CD8-positive, alpha-beta memory T cell (primary cell): ENCODE measurements at regions of chr12 and their contacts with region 1.

Region 1: GRCh38 chr12:104064031-104064822 is at the start of gene HCFC2:
- DNase-seq: peak; percentile 83 to 90 (median 87)
- H3K4me3 ChIP-seq: peak within 1 kb of the TSS; percentile 99
- H3K4me3 Mint-ChIP-seq: peak within 1 kb of the TSS; percentile 92 to 97 (median 95)
- H3K27ac ChIP-seq: peak within 1 kb of the TSS; percentile 84
- H3K27ac Mint-ChIP-seq: peak within 1 kb of the TSS; percentile 82 to 95 (median 91)
- H3K4me1 ChIP-seq: peaks cover 9% of the 10 kb centered on the region
- H3K4me1 Mint-ChIP-seq: peaks cover 24 to 36% (median 31%) of the 10 kb centered on the region in 3 donors
- H3K27me3 ChIP-seq: no peaks in the 10 kb centered on the region
- H3K27me3 Mint-ChIP-seq: peaks cover 3 to 22% of the 10 kb centered on the region in 2 donors
- total RNA-seq, gene HCFC2: 12.5 to 13.0 TPM

Region 2: GRCh38 chr12:103965590-103966504 is 98.4 kb before region 1 on chr12 and contains the start of gene TDG:
- CTCF ChIA-PET with region 1: no interaction called
- POLR2A ChIA-PET with region 1: interaction called, 12 read pairs
- DNase-seq: peak; percentile 95 to 99 (median 97)
- H3K4me3 ChIP-seq: peak within 1 kb of the TSS; percentile 74
- H3K4me3 Mint-ChIP-seq: peak within 1 kb of the TSS; percentile 93 to 99 (median 96)
- H3K27ac ChIP-seq: peak within 1 kb of the TSS; percentile 90
- H3K27ac Mint-ChIP-seq: peak within 1 kb of the TSS; percentile 91 to 100 (median 99)
- H3K4me1 ChIP-seq: peaks cover 41% of the 10 kb centered on the region
- H3K4me1 Mint-ChIP-seq: peaks cover 54 to 68% (median 66%) of the 10 kb centered on the region in 3 donors
- H3K27me3 ChIP-seq: no peaks in the 10 kb centered on the region
- H3K27me3 Mint-ChIP-seq: no peaks in the 10 kb centered on the region
- total RNA-seq, gene TDG: 51.2 to 52.6 TPM

Region 3: GRCh38 chr12:104137913-104138796 is 73.9 kb after region 1 on chr12 and contains the start of gene NFYB:
- CTCF ChIA-PET with region 1: no interaction called
- POLR2A ChIA-PET with region 1: interaction called, 12 read pairs
- DNase-seq: peak; percentile 85 to 96 (median 93)
- H3K4me3 ChIP-seq: peak within 1 kb of the TSS; percentile 49
- H3K4me3 Mint-ChIP-seq: peak within 1 kb of the TSS; percentile 85 to 98 (median 92)
- H3K27ac ChIP-seq: peak within 1 kb of the TSS; percentile 44
- H3K27ac Mint-ChIP-seq: peak within 1 kb of the TSS; percentile 30 to 93 (median 92)
- H3K4me1 ChIP-seq: peaks cover 24% of the 10 kb centered on the region
- H3K4me1 Mint-ChIP-seq: peaks cover 6 to 18% (median 15%) of the 10 kb centered on the region in 3 donors
- H3K27me3 ChIP-seq: no peaks in the 10 kb centered on the region
- H3K27me3 Mint-ChIP-seq: peaks cover 0 to 2% of the 10 kb centered on the region in 2 donors
- total RNA-seq, gene NFYB: 25.5 to 27.5 TPM

Region 4: DNA sequence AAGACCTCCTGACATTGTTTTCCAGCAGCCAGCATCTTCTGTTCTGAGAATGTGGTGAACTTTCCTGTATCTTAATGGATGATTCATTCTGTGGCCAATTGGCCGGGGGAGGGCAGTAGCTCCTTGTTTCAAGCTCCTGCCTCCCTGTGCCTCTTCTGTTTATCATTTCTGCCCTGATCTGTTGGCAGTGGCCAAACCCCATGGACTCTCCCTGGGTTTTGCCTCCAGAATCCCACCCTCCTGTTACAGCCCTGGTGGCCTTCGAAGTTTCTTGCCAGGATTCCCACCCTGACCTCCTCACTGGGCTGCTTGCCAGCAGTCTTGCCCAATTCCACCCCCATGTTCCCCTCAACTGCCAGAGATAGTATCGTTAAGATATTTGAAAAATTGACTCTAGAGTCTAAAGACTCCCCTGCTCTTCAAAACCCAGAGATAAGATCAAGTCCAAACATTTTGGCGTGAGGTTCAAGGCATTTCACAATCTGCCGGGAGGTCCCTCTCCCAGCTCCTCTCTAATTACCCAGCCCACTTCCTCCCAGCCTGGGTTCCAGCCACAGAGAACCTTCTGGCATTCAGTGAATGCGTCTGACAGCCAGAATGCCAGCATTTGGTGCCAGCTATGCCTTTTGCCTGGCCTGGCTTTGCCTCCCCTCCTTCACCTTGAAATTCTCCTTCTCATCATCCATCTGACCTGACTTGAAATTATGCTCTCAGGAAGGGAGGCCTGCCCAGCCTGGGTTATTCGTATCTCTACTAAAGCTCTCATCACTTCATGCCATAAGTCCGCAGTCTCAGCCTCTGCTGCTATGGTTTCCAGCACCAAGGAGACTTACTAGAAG is 113.7 kb after region 1 on chr12:
- CTCF ChIA-PET with region 1: no interaction called
- POLR2A ChIA-PET with region 1: no interaction called
- DNase-seq: no peak
- H3K4me3 ChIP-seq: no peak overlapping the region
- H3K4me3 Mint-ChIP-seq: no peak overlapping the region
- H3K27ac ChIP-seq: no peak overlapping the region
- H3K27ac Mint-ChIP-seq: no peak overlapping the region
- H3K4me1 ChIP-seq: no peaks in the 10 kb centered on the region
- H3K4me1 Mint-ChIP-seq: no peaks in the 10 kb centered on the region
- H3K27me3 ChIP-seq: no peaks in the 10 kb centered on the region
- H3K27me3 Mint-ChIP-seq: peaks cover 0 to 2% of the 10 kb centered on the region in 2 donors